Breast epithelium (tissue), 4 donors: ENCODE measurements at regions of chr11 and their contacts with region 1.

Region 1: GRCh38 chr11:35791088-35791958 is 128.7 kb downstream of the TRIM44 start:
- DNase-seq: no peak
- H3K4me3 ChIP-seq: no peak overlapping the region
- H3K27ac ChIP-seq: no peak overlapping the region
- H3K4me1 ChIP-seq: no peaks in the 10 kb centered on the region
- H3K27me3 ChIP-seq: no peaks in the 10 kb centered on the region
- CTCF ChIP-seq: no peak
- POLR2A ChIP-seq: no peak

Region 2: GRCh38 chr11:35571696-35572095 is 219.6 kb before region 1 on chr11:
- intact Hi-C with region 1: loop called (anchors 2 kb)
- DNase-seq: no peak
- H3K4me3 ChIP-seq: no peak overlapping the region
- H3K27ac ChIP-seq: no peak overlapping the region
- H3K4me1 ChIP-seq: no peaks in the 10 kb centered on the region
- H3K27me3 ChIP-seq: no peaks in the 10 kb centered on the region
- CTCF ChIP-seq: no peak
- POLR2A ChIP-seq: no peak